Vagina (tissue), 2 donors: ENCODE measurements at regions of chr5 and their contacts with region 1.

Region 1: DNA sequence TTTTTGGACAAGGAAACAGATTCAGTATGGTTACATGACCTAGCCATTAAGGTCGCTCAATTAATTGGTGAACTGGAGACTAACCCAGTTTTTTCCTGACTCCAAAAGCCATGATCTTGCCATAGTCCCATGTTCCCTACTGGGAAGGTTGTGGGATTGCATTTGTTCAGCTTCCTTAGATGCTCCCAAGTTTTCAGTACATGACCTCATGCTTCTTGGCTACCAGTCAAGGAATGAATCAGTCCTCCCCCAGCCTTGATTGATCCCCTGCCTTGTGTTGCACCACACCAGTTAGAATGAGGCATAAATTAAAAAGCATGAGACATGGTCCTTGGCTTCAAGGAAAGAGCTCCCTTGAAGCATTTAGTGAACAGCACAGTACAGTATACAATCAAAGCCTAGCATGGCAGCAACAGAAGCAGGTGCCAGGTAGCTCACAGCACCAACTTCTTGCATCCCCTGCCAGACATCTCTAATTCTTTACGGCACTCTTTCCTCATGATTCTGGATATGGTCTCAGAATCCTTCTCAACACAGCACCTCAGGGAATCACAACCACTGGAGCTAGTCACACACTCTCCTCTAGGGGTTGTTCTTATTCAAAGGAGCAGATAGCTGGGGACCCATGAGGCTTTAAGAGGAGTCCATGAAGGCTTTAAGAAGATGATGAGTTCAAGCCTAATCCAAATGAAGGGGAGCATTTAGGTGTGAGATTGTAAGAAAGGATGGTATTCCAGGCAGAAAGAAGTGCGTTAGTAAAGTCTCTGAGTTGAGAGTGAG is 295.5 kb upstream of the CLINT1 start:
- DNase-seq: no peak
- H3K4me3 ChIP-seq: no peak overlapping the region
- H3K27ac ChIP-seq: no peak overlapping the region
- H3K4me1 ChIP-seq: peaks cover 14% of the 10 kb centered on the region
- H3K27me3 ChIP-seq: no peaks in the 10 kb centered on the region
- CTCF ChIP-seq: no peak
- POLR2A ChIP-seq: no peak

Region 2: GRCh38 chr5:158100373-158100888 is 54.0 kb before region 1 on chr5:
- intact Hi-C with region 1: no loop called
- DNase-seq: no peak
- H3K4me3 ChIP-seq: no peak overlapping the region
- H3K27ac ChIP-seq: no peak overlapping the region
- H3K4me1 ChIP-seq: no peaks in the 10 kb centered on the region
- H3K27me3 ChIP-seq: no peaks in the 10 kb centered on the region
- CTCF ChIP-seq: no peak
- POLR2A ChIP-seq: no peak

Region 3: GRCh38 chr5:158857976-158858375 is 703.6 kb after region 1 on chr5:
- intact Hi-C with region 1: loop called (anchors 5 kb)
- DNase-seq: no peak
- H3K4me3 ChIP-seq: no peak overlapping the region
- H3K27ac ChIP-seq: no peak overlapping the region
- H3K4me1 ChIP-seq: peaks cover 7% of the 10 kb centered on the region
- H3K27me3 ChIP-seq: no peaks in the 10 kb centered on the region
- CTCF ChIP-seq: no peak
- POLR2A ChIP-seq: no peak

Region 4: GRCh38 chr5:159582756-159583523 is 1428.5 kb after region 1 on chr5:
- intact Hi-C with region 1: no loop called
- DNase-seq: no peak
- H3K4me3 ChIP-seq: no peak overlapping the region
- H3K27ac ChIP-seq: no peak overlapping the region
- H3K4me1 ChIP-seq: no peaks in the 10 kb centered on the region
- H3K27me3 ChIP-seq: no peaks in the 10 kb centered on the region
- CTCF ChIP-seq: no peak
- POLR2A ChIP-seq: no peak